CD8-positive, alpha-beta memory T cell (primary cell): ENCODE measurements at regions of chr6 and their contacts with region 1.

Region 1: GRCh38 chr6:73435236-73435635 is 16.9 kb downstream of the CGAS start:
- DNase-seq: no peak
- H3K4me3 ChIP-seq: no peak overlapping the region
- H3K4me3 Mint-ChIP-seq: no peak overlapping the region
- H3K27ac ChIP-seq: no peak overlapping the region
- H3K27ac Mint-ChIP-seq: no peak overlapping the region
- H3K4me1 ChIP-seq: no peaks in the 10 kb centered on the region
- H3K4me1 Mint-ChIP-seq: peaks cover 12 to 42% (median 35%) of the 10 kb centered on the region in 3 donors
- H3K27me3 ChIP-seq: no peaks in the 10 kb centered on the region
- H3K27me3 Mint-ChIP-seq: no peaks in the 10 kb centered on the region

Region 2: DNA sequence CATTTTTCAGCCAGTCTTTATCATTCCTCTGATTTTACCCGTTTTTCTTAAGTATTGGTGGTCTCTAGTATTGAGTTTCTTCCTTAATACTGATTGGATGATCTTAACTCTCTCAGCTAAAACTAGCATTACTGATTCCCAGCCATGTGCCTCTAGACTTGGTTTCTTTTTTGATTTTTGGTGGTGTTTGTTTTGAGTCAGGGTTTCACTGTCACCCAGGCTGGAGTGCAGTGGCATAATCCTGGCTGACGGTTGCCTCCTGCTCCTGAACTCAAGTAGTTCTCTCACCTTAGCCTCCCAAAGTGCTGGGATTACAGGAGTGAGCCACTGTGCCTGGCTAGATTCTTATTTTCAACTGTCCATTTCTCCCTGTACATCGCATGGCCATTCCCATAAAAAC is 106.0 kb before region 1 on chr6:
- CTCF ChIA-PET with region 1: no interaction called
- POLR2A ChIA-PET with region 1: no interaction called
- DNase-seq: no peak
- H3K4me3 ChIP-seq: no peak overlapping the region
- H3K4me3 Mint-ChIP-seq: no peak overlapping the region
- H3K27ac ChIP-seq: no peak overlapping the region
- H3K27ac Mint-ChIP-seq: peak overlapping the region in 1 of 8 donors; percentile 3
- H3K4me1 ChIP-seq: no peaks in the 10 kb centered on the region
- H3K4me1 Mint-ChIP-seq: no peaks in the 10 kb centered on the region
- H3K27me3 ChIP-seq: no peaks in the 10 kb centered on the region
- H3K27me3 Mint-ChIP-seq: peaks cover 5 to 34% of the 10 kb centered on the region in 2 donors

Region 3: GRCh38 chr6:73367761-73368355 is 67.4 kb before region 1 on chr6:
- CTCF ChIA-PET with region 1: no interaction called
- POLR2A ChIA-PET with region 1: interaction called, 16 read pairs
- DNase-seq: no peak
- H3K4me3 ChIP-seq: no peak overlapping the region
- H3K4me3 Mint-ChIP-seq: no peak overlapping the region
- H3K27ac ChIP-seq: no peak overlapping the region
- H3K27ac Mint-ChIP-seq: peak overlapping the region in 1 of 8 donors; percentile 24
- H3K4me1 ChIP-seq: no peaks in the 10 kb centered on the region
- H3K4me1 Mint-ChIP-seq: no peaks in the 10 kb centered on the region
- H3K27me3 ChIP-seq: no peaks in the 10 kb centered on the region
- H3K27me3 Mint-ChIP-seq: peaks cover 1 to 3% of the 10 kb centered on the region in 2 donors

Region 4: GRCh38 chr6:73418081-73418741 is 17.0 kb before region 1 on chr6:
- CTCF ChIA-PET with region 1: no interaction called
- POLR2A ChIA-PET with region 1: no interaction called
- DNase-seq: no peak
- H3K4me3 ChIP-seq: no peak overlapping the region
- H3K4me3 Mint-ChIP-seq: peak overlapping the region in 1 of 7 donors; percentile 4
- H3K27ac ChIP-seq: no peak overlapping the region
- H3K27ac Mint-ChIP-seq: peak overlapping the region; percentile 18 to 94 (median 81)
- H3K4me1 ChIP-seq: peaks cover 20% of the 10 kb centered on the region
- H3K4me1 Mint-ChIP-seq: peaks cover 22 to 35% (median 27%) of the 10 kb centered on the region in 3 donors
- H3K27me3 ChIP-seq: no peaks in the 10 kb centered on the region
- H3K27me3 Mint-ChIP-seq: no peaks in the 10 kb centered on the region

Region 5: DNA sequence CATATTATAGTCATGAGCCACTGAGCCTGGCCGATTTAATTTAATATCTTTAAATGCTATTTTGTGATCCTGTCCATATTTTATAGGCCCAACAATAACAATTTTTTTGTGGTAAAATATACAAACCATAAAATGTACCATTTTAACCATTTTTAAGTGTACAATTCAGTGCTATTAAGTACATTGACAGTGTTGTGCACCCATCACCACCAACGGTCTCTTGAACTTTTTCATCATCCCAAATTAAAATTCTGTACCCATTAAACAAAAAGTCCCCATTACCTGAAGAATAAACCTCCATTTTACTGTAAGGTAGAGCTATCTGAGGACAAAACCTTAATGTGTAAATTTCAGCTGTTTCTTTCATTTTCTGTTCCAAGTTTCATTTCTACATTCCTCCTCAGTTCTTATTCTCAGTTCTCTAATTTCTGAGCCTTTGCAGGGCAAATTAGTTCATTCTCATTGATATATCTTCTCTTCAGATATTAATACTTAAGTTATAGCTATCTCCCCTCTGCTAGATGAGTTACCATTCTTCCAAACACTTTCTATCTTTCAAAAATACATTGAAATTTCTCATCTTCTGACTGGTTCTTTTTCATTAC is 36.6 kb after region 1 on chr6:
- CTCF ChIA-PET with region 1: no interaction called
- POLR2A ChIA-PET with region 1: no interaction called
- DNase-seq: no peak
- H3K4me3 ChIP-seq: no peak overlapping the region
- H3K4me3 Mint-ChIP-seq: peak overlapping the region in 4 of 7 donors; percentile 16 to 74 (median 54)
- H3K27ac ChIP-seq: no peak overlapping the region
- H3K27ac Mint-ChIP-seq: peak overlapping the region; percentile 6 to 90 (median 68)
- H3K4me1 ChIP-seq: no peaks in the 10 kb centered on the region
- H3K4me1 Mint-ChIP-seq: peaks cover 11 to 23% (median 18%) of the 10 kb centered on the region in 3 donors
- H3K27me3 ChIP-seq: no peaks in the 10 kb centered on the region
- H3K27me3 Mint-ChIP-seq: no peaks in the 10 kb centered on the region

Region 6: GRCh38 chr6:73548458-73549446 is 113.5 kb after region 1 on chr6:
- CTCF ChIA-PET with region 1: no interaction called
- POLR2A ChIA-PET with region 1: no interaction called
- DNase-seq: no peak
- H3K4me3 ChIP-seq: no peak overlapping the region
- H3K4me3 Mint-ChIP-seq: no peak overlapping the region
- H3K27ac ChIP-seq: no peak overlapping the region
- H3K27ac Mint-ChIP-seq: peak overlapping the region in 1 of 8 donors; percentile 32
- H3K4me1 ChIP-seq: no peaks in the 10 kb centered on the region
- H3K4me1 Mint-ChIP-seq: no peaks in the 10 kb centered on the region
- H3K27me3 ChIP-seq: no peaks in the 10 kb centered on the region
- H3K27me3 Mint-ChIP-seq: peaks cover 0 to 5% of the 10 kb centered on the region in 2 donors